Upper lobe of right lung (tissue), 1 donor: ENCODE measurements at regions of chr12 and their contacts with region 1.

Region 1: DNA sequence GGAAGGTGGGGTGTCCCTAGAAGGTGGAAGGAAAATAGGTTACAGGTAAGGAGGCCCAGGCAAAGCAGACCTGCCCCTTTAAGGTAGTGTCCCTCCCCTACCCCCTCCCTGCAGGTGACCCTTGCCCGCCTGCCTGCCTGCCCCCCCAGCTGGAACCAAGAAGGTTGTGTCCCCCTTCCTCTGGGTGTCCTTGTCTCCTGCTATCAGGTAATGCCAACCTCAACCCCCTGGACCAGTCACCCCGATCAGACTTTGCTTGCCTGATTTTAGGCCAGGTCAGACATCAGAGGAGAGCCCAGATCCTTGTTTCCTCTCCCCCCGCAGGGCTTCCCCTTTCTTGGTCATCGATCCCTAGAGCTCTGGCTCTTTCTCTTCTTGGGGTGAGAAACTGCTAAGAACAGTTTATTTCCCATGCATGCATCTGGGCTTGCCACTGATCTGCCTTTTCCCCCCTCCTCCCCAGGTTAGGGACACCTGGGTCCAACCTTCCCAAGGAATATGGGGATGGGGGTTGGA is at the start of gene SLC39A5:
- DNase-seq: no peak
- ATAC-seq: no peak
- H3K4me3 ChIP-seq: no peak within 1 kb of the TSS
- H3K27ac ChIP-seq: no peak within 1 kb of the TSS
- H3K4me1 ChIP-seq: peaks cover 1% of the 10 kb centered on the region
- H3K27me3 ChIP-seq: no peaks in the 10 kb centered on the region
- CTCF ChIP-seq: no peak
- total RNA-seq, gene SLC39A5: 0.87 TPM

Region 2: DNA sequence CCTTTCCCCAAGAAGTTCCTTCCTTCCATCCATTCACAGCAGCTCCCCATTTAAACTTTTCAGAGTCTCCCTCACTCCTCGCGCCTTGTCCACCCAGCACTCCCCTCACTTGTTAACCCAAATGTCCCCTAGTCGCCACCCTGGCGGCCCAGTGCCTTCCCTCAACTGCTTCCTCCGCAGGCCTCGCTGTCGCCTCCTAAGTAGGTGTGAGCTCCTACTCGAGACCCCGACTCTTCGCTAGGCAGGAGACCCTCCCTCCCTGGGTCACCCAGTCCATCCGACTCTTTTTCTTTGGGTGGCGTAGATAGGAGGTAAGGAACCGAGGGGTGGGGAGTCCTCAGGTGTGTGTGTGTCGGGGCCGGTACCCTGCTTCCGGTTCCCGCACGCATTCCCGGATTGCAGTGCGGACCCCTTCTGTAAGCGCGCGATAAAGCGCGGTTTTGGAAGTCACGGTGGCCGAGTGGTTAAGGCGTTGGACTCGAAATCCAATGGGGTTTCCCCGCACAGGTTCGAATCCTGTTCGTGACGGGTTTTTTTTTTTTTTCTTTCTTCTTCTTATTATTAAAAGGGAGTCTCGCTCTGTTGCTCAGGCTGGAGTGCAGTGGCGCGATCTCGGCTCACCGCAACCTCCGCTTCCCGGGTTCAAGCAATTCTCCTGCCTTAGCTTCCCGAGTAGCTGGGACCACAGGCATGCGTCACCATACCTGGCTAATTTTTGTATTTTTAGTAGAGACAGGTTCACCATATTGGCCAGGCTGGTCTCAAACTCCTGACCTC is 39.9 kb before region 1 on chr12:
- intact Hi-C with region 1: loop called (anchors 5 kb)
- DNase-seq: peak; percentile 92
- ATAC-seq: peak; percentile 67
- H3K4me3 ChIP-seq: peak overlapping the region; percentile 82
- H3K27ac ChIP-seq: peak overlapping the region; percentile 93
- H3K4me1 ChIP-seq: peaks cover 25% of the 10 kb centered on the region
- H3K27me3 ChIP-seq: no peaks in the 10 kb centered on the region
- CTCF ChIP-seq: no peak